Naive thymus-derived CD4-positive, alpha-beta T cell (primary cell): ENCODE measurements at regions of chr1 and their contacts with region 1.

Region 1: GRCh38 chr1:160539990-160540858 is 17.2 kb upstream of the SLAMF6 start:
- DNase-seq: peak in 8 of 9 donors; percentile 43 to 69 (median 54)
- ATAC-seq: peak; percentile 96
- H3K4me3 ChIP-seq: peak overlapping the region; percentile 23
- H3K4me3 Mint-ChIP-seq: peak overlapping the region; percentile 40 to 79 (median 64)
- H3K27ac ChIP-seq: peak overlapping the region; percentile 65
- H3K27ac Mint-ChIP-seq: peak overlapping the region; percentile 64 to 97 (median 91)
- H3K4me1 ChIP-seq: peaks cover 45 to 54% of the 10 kb centered on the region in 2 donors
- H3K4me1 Mint-ChIP-seq: peaks cover 46 to 63% (median 55%) of the 10 kb centered on the region in 7 donors
- H3K27me3 ChIP-seq: no peaks in the 10 kb centered on the region
- H3K27me3 Mint-ChIP-seq: no peaks in the 10 kb centered on the region

Region 2: DNA sequence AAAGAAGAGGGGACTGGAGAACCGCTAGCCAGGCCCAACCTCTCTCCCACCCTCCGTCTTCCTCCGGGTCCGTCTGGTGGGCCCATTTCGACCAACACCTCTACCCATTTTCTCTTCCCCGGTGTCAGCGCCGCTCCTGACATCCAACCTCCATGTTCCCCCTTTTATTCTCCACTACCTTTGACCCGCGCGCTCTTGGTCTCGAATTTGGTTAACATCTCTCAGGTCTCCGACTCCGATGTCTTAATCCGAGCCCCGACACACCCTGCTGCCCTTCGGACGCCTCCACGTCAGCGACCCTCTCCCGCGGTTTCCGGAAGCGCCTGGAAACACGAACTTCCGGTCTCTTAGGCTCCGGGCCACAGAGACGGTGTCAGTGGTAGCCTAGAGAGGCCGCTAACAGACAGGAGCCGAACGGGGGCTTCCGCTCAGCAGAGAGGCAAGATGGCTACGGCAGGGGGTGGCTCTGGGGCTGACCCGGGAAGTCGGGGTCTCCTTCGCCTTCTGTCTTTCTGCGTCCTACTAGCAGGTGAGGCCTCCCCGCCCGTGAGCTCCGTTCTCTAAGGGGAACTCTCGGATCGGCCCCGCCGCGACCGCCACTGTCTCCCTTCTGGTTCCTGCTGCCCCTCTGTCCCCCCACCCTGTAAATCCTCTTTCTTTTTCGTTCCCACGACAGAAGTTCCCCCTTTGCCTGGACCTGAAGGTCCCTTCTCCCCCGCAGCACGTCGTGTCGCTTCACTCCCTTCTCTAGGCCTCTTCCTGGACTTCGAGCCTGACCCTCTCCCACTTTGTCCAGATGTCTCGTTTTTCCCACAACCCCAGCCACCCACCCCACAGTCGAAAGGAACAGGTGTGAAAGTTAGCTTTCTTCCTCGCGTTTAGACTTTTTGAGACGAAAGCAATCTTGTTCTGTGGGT is 197.0 kb before region 1 on chr1 and contains the starts of genes COPA and NCSTN:
- CTCF ChIA-PET with region 1: no interaction called
- POLR2A ChIA-PET with region 1: no interaction called
- intact Hi-C with region 1: loop called in 1 of 2 experiments (anchors 5 kb)
- DNase-seq: peak; percentile 67 to 93 (median 86)
- ATAC-seq: peak; percentile 98
- H3K4me3 ChIP-seq: peak within 1 kb of the TSS; percentile 87
- H3K4me3 Mint-ChIP-seq: peak within 1 kb of the TSS; percentile 99 to 100 (median 100)
- H3K27ac ChIP-seq: peak within 1 kb of the TSS; percentile 98
- H3K27ac Mint-ChIP-seq: peak within 1 kb of the TSS; percentile 98 to 100 (median 100)
- H3K4me1 ChIP-seq: peaks cover 23 to 29% of the 10 kb centered on the region in 2 donors
- H3K4me1 Mint-ChIP-seq: peaks cover 32 to 78% (median 66%) of the 10 kb centered on the region in 7 donors
- H3K27me3 ChIP-seq: no peaks in the 10 kb centered on the region
- H3K27me3 Mint-ChIP-seq: no peaks in the 10 kb centered on the region
- total RNA-seq, gene COPA: 104 to 151 (median 118) TPM
- total RNA-seq, gene NCSTN: 68.4 to 91.1 (median 73.5) TPM

Region 3: GRCh38 chr1:160474392-160475242 is 65.6 kb before region 1 on chr1:
- CTCF ChIA-PET with region 1: no interaction called
- POLR2A ChIA-PET with region 1: no interaction called
- intact Hi-C with region 1: loop called in 1 of 2 experiments (anchors 5 kb)
- DNase-seq: no peak
- ATAC-seq: no peak
- H3K4me3 ChIP-seq: no peak overlapping the region
- H3K4me3 Mint-ChIP-seq: no peak overlapping the region
- H3K27ac ChIP-seq: no peak overlapping the region
- H3K27ac Mint-ChIP-seq: no peak overlapping the region
- H3K4me1 ChIP-seq: peaks cover 17% of the 10 kb centered on the region in 2 donors
- H3K4me1 Mint-ChIP-seq: peaks cover 0 to 9% (median 1%) of the 10 kb centered on the region in 7 donors
- H3K27me3 ChIP-seq: no peaks in the 10 kb centered on the region
- H3K27me3 Mint-ChIP-seq: no peaks in the 10 kb centered on the region

Region 4: DNA sequence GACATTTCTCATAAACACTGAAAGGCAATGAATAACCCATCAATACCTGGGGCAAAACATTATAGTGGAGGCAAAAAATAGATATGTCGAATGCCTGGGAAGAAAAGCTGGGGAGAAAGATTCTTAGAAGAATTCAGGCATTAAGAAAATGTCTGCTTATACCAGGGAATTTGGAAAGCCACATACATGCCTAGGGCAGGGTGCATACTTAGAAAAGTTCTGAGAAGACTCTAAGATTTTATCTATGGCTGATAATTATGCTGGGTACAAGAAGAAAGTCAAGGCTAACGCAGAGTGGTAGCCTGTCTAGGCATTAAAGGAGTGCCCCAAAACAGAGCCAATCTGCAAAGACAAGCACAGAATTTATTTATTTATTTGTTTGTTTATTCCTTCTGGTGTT is 35.6 kb before region 1 on chr1:
- CTCF ChIA-PET with region 1: no interaction called
- POLR2A ChIA-PET with region 1: no interaction called
- intact Hi-C with region 1: loop called in 1 of 2 experiments (anchors 5 kb)
- DNase-seq: no peak
- ATAC-seq: no peak
- H3K4me3 ChIP-seq: no peak overlapping the region
- H3K4me3 Mint-ChIP-seq: peak overlapping the region in 2 of 10 donors; percentile 15 to 38
- H3K27ac ChIP-seq: no peak overlapping the region
- H3K27ac Mint-ChIP-seq: peak overlapping the region in 2 of 9 donors; percentile 49 to 59
- H3K4me1 ChIP-seq: peaks cover 4 to 43% of the 10 kb centered on the region in 2 donors
- H3K4me1 Mint-ChIP-seq: peaks cover 13 to 74% (median 56%) of the 10 kb centered on the region in 7 donors
- H3K27me3 ChIP-seq: no peaks in the 10 kb centered on the region
- H3K27me3 Mint-ChIP-seq: no peaks in the 10 kb centered on the region

Region 5: GRCh38 chr1:160558660-160559380 is 18.6 kb after region 1 on chr1:
- CTCF ChIA-PET with region 1: interaction called, 6 read pairs
- POLR2A ChIA-PET with region 1: interaction called, 9 read pairs
- intact Hi-C with region 1: loop called (anchors 2 kb)
- DNase-seq: no peak
- ATAC-seq: no peak
- H3K4me3 ChIP-seq: peak overlapping the region; percentile 42
- H3K4me3 Mint-ChIP-seq: peak overlapping the region in 9 of 10 donors; percentile 22 to 90 (median 70)
- H3K27ac ChIP-seq: no peak overlapping the region
- H3K27ac Mint-ChIP-seq: peak overlapping the region; percentile 8 to 97 (median 81)
- H3K4me1 ChIP-seq: peaks cover 36 to 64% of the 10 kb centered on the region in 2 donors
- H3K4me1 Mint-ChIP-seq: peaks cover 33 to 67% (median 57%) of the 10 kb centered on the region in 7 donors
- H3K27me3 ChIP-seq: no peaks in the 10 kb centered on the region
- H3K27me3 Mint-ChIP-seq: no peaks in the 10 kb centered on the region

Region 6: DNA sequence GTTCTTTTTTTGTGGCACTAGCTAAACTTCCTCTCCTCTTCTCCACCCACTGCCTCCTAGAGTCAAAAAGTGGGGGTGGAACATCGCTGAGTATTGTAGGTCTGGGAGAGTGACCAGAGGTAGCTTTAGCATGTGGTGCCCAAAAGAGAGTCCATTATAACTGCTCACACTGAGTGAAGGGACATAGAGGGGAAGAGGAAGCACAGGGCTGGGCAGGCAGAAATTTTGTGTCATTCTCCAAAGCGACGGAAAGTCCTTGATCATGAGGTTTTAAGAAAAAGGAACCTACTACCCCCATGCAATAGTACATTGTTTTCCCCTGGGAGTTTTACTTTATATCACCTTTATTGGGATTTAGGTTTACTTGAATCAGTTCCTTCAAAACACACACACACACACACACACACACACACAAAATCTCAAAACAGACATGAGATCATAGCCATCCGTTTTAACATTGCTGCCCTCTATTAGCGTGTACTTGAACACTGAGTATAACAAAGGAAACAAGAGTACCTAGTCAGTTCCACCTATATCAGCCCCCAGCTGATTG is 35.0 kb after region 1 on chr1:
- CTCF ChIA-PET with region 1: interaction called, 17 read pairs
- POLR2A ChIA-PET with region 1: interaction called, 21 read pairs
- intact Hi-C with region 1: loop called (anchors 1 to 2 kb)
- DNase-seq: peak in 1 of 9 donors; percentile 23
- ATAC-seq: peak; percentile 67
- H3K4me3 ChIP-seq: peak overlapping the region; percentile 66
- H3K4me3 Mint-ChIP-seq: peak overlapping the region; percentile 71 to 97 (median 86)
- H3K27ac ChIP-seq: peak overlapping the region; percentile 79
- H3K27ac Mint-ChIP-seq: peak overlapping the region; percentile 52 to 97 (median 94)
- H3K4me1 ChIP-seq: peaks cover 55 to 86% of the 10 kb centered on the region in 2 donors
- H3K4me1 Mint-ChIP-seq: peaks cover 69 to 100% (median 94%) of the 10 kb centered on the region in 7 donors
- H3K27me3 ChIP-seq: no peaks in the 10 kb centered on the region
- H3K27me3 Mint-ChIP-seq: no peaks in the 10 kb centered on the region